WTC11 (cell line): ENCODE measurements at regions of chr9 and their contacts with region 1.

Region 1: GRCh38 chr9:36102742-36103495 is 33.6 kb upstream of the GLIPR2 start:
- DNase-seq: peak; percentile 86
- ATAC-seq: peak; percentile 95
- H3K4me3 Mint-ChIP-seq: no peak overlapping the region
- H3K27ac Mint-ChIP-seq: peak overlapping the region; percentile 79
- H3K4me1 Mint-ChIP-seq: peaks cover 24% of the 10 kb centered on the region
- H3K27me3 Mint-ChIP-seq: no peaks in the 10 kb centered on the region
- CTCF ChIP-seq: peak; percentile 49

Region 2: GRCh38 chr9:35954942-35955546 is 147.9 kb before region 1 on chr9:
- CTCF ChIA-PET with region 1: no interaction called
- POLR2A ChIA-PET with region 1: no interaction called
- DNase-seq: peak; percentile 43
- ATAC-seq: peak; percentile 84
- H3K4me3 Mint-ChIP-seq: no peak overlapping the region
- H3K27ac Mint-ChIP-seq: no peak overlapping the region
- H3K4me1 Mint-ChIP-seq: peaks cover 5% of the 10 kb centered on the region; the same call in 1 of the 2 replicates
- H3K27me3 Mint-ChIP-seq: peaks cover 24% of the 10 kb centered on the region
- CTCF ChIP-seq: peak; percentile 78

Region 3: DNA sequence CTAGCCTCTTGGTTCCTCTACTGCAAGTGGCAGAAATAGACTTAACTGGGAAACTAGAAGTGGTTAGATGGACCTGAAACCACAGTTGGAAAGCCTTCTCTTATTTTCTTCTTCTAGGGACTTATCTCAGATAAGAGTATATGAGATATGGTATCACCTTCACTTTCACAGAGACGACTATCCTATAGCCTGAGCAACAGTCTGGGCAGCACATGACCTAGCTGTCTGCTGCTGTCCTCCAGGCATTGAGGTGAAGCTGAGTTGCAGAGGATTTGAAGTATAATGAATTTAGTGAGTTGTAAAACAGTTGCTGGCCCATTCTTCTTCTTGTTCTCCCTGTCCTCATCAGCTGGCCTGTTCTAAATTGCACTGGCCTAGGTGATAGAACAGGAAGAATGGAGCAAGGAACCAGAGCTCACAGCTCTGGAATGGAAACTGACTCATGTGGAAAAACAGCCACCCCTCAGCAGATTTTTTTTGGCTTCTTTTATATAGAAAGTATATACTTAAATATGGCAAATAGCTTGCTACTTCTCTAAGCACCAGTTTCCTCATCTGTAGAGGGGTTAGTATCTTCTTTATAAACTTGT is 38.4 kb before region 1 on chr9:
- CTCF ChIA-PET with region 1: no interaction called
- POLR2A ChIA-PET with region 1: no interaction called
- DNase-seq: no peak
- ATAC-seq: no peak
- H3K4me3 Mint-ChIP-seq: no peak overlapping the region
- H3K27ac Mint-ChIP-seq: no peak overlapping the region
- H3K4me1 Mint-ChIP-seq: no peaks in the 10 kb centered on the region
- H3K27me3 Mint-ChIP-seq: no peaks in the 10 kb centered on the region
- CTCF ChIP-seq: no peak

Region 4: GRCh38 chr9:36088020-36088419 is 14.9 kb before region 1 on chr9:
- CTCF ChIA-PET with region 1: interaction called, 14 read pairs
- POLR2A ChIA-PET with region 1: no interaction called
- DNase-seq: no peak
- ATAC-seq: no peak
- H3K4me3 Mint-ChIP-seq: no peak overlapping the region
- H3K27ac Mint-ChIP-seq: no peak overlapping the region
- H3K4me1 Mint-ChIP-seq: peaks cover 25% of the 10 kb centered on the region
- H3K27me3 Mint-ChIP-seq: no peaks in the 10 kb centered on the region
- CTCF ChIP-seq: no peak

Region 5: GRCh38 chr9:36118706-36119105 is 15.8 kb after region 1 on chr9:
- CTCF ChIA-PET with region 1: interaction called, 43 read pairs
- POLR2A ChIA-PET with region 1: no interaction called
- DNase-seq: no peak
- ATAC-seq: no peak
- H3K4me3 Mint-ChIP-seq: no peak overlapping the region
- H3K27ac Mint-ChIP-seq: no peak overlapping the region
- H3K4me1 Mint-ChIP-seq: no peaks in the 10 kb centered on the region
- H3K27me3 Mint-ChIP-seq: no peaks in the 10 kb centered on the region
- CTCF ChIP-seq: no peak

Region 6: GRCh38 chr9:36166101-36166927 is 63.4 kb after region 1 on chr9:
- CTCF ChIA-PET with region 1: interaction called, 131 read pairs
- POLR2A ChIA-PET with region 1: interaction called, 6 read pairs
- DNase-seq: peak; percentile 85
- ATAC-seq: peak; percentile 66
- H3K4me3 Mint-ChIP-seq: peak overlapping the region; percentile 68
- H3K27ac Mint-ChIP-seq: no peak overlapping the region
- H3K4me1 Mint-ChIP-seq: peaks cover 44% of the 10 kb centered on the region
- H3K27me3 Mint-ChIP-seq: peaks cover 7% of the 10 kb centered on the region
- CTCF ChIP-seq: peak; percentile 86

Region 7: GRCh38 chr9:36190388-36191287 is 87.7 kb after region 1 on chr9 and contains the start of gene CLTA:
- CTCF ChIA-PET with region 1: interaction called, 16 read pairs
- POLR2A ChIA-PET with region 1: interaction called, 4 read pairs
- DNase-seq: peak; percentile 96
- ATAC-seq: peak; percentile 97
- H3K4me3 Mint-ChIP-seq: peak within 1 kb of the TSS; percentile 97
- H3K27ac Mint-ChIP-seq: peak within 1 kb of the TSS; percentile 93
- H3K4me1 Mint-ChIP-seq: peaks cover 34% of the 10 kb centered on the region
- H3K27me3 Mint-ChIP-seq: peaks cover 18% of the 10 kb centered on the region
- CTCF ChIP-seq: peak; percentile 22; the same call in 1 of the 2 replicates
- total RNA-seq, gene CLTA: 213 to 220 TPM (median 220 TPM) in 3 replicates

Region 8: DNA sequence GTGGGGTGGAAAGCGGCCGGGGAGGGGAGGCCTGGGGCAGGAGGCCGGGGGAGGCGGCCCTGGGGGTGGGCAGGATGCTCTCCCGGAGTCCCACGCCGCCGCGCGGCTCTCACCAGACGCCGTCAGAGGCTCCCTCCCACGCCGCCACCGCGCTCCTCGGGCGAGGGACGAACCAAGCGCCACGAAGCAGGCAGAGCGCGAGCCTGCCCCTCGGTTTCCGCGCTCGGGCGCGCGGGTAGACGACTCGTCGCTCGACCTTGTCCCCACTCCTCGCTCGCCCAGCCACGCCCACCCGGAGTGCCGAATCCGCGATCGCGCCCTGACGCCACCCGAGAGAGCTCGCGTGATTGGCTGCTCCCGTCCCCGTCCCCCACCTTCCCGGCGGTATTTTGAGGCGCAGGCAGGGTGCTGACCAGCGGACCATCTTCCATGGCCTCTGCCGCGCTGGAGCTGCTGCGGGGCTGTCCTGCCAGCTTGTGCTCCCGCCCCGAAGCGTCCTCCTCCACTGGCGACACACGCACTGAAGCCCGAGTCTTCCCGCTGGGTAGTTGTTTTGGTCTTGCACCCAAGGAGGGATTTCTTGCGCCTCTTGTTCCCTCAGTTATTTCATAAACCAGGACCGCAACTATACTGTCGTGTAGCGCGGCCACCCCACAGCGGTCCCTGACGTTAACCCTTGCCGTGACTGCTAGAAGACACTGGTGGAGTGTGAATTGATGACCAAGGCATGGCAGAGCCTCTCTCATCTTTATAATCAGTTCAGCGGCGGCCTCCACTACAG is 155.5 kb after region 1 on chr9 and contains the start of gene GNE:
- CTCF ChIA-PET with region 1: no interaction called
- POLR2A ChIA-PET with region 1: interaction called, 10 read pairs
- DNase-seq: peak; percentile 94
- ATAC-seq: peak; percentile 81
- H3K4me3 Mint-ChIP-seq: peak within 1 kb of the TSS; percentile 88
- H3K27ac Mint-ChIP-seq: peak within 1 kb of the TSS; percentile 25
- H3K4me1 Mint-ChIP-seq: no peaks in the 10 kb centered on the region
- H3K27me3 Mint-ChIP-seq: no peaks in the 10 kb centered on the region
- CTCF ChIP-seq: no peak
- total RNA-seq, gene GNE: 4.6 to 9.0 TPM (median 8.9 TPM) in 3 replicates